Left ventricle myocardium superior (tissue), 1 donor: ENCODE measurements at regions of chr10 and their contacts with region 1.

Region 1: GRCh38 chr10:29392376-29393021 is 103.6 kb downstream of the LYZL1 start:
- DNase-seq: no peak
- ATAC-seq: peak; percentile 54

Region 2: GRCh38 chr10:28177944-28178637 is 1214.4 kb before region 1 on chr10:
- intact Hi-C with region 1: no loop called
- DNase-seq: no peak
- ATAC-seq: peak; percentile 27

Region 3: DNA sequence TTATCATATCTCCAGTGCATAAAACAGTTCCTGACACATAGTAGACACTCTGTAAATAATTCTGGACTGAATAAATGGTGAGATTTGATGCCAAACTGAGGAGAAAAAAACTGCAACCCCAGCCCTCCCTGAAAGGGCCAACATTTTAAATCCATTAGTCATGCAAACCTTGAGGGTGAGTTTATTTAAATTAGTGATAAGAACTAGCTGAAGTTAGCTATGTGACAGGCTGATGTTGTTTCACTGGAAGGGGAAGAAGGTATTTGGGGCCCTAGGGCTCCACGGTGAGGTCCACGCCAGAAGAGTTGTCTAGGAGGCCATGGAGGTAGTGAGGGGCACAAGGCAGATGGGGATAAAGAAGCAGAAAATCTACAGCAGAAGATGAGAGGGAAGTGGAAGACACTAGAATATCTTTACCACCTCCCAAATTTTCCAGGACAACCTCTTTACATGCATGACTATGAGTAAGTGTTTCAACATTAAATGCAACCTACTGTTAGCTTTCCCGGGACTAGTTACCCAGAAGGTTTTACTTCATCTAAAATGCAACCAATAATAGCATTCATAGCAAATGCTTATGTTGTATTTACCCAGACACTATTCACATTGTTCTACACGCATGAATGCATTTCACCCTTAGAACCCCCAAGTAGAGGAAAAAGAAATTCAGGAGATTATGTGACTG is 286.8 kb before region 1 on chr10:
- intact Hi-C with region 1: no loop called
- DNase-seq: no peak
- ATAC-seq: no peak

Region 4: GRCh38 chr10:29141063-29141462 is 251.4 kb before region 1 on chr10:
- intact Hi-C with region 1: no loop called
- DNase-seq: no peak
- ATAC-seq: no peak

Region 5: DNA sequence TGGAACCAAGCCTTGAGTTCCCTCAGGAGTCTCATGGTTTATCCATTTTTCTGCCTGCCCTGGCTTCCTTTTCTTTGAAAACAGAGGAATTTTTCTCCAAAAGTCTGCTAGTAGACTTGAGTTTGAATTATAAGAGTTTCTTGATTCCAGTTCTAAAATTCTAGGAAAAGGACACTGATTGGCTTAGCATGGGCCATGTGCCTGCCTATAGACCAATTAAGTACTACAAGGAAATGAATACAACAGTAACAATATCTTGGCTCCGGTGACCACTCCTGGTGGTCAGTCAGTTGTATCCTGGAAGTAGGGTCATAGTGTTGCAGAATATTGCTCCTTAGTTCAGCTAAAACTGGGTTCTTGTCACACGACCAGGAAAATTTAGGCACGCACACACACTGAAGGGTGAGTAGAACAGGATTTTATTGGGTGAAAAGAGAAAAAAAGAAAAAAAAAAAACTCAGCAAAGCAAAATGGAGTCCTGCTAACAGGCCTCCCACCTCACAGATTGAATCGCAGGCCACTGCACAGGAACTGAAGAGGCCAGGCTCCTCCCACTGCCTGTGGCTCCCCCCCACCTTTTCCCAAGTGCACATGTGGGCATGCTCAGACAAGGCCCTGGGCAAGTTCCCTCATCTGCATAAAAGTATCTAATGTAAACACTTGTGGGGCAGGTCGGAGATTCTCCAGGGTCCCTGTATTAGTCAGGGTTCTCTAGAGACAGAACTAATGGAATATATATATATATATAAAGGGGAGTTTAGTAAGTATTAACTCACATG is 51.4 kb after region 1 on chr10:
- intact Hi-C with region 1: loop called (anchors 10 kb)
- DNase-seq: no peak
- ATAC-seq: no peak